Lower lobe of right lung (tissue), 2 donors: ENCODE measurements at regions of chr22 and their contacts with region 1.

Region 1: GRCh38 chr22:40922484-40923303 is 28.5 kb upstream of the RBX1 start:
- DNase-seq: no peak
- ATAC-seq: peak; percentile 83
- H3K4me3 ChIP-seq: no peak overlapping the region
- H3K27ac ChIP-seq: no peak overlapping the region
- H3K4me1 ChIP-seq: peaks cover 4% of the 10 kb centered on the region
- H3K27me3 ChIP-seq: no peaks in the 10 kb centered on the region
- CTCF ChIP-seq: peak; percentile 77

Region 2: DNA sequence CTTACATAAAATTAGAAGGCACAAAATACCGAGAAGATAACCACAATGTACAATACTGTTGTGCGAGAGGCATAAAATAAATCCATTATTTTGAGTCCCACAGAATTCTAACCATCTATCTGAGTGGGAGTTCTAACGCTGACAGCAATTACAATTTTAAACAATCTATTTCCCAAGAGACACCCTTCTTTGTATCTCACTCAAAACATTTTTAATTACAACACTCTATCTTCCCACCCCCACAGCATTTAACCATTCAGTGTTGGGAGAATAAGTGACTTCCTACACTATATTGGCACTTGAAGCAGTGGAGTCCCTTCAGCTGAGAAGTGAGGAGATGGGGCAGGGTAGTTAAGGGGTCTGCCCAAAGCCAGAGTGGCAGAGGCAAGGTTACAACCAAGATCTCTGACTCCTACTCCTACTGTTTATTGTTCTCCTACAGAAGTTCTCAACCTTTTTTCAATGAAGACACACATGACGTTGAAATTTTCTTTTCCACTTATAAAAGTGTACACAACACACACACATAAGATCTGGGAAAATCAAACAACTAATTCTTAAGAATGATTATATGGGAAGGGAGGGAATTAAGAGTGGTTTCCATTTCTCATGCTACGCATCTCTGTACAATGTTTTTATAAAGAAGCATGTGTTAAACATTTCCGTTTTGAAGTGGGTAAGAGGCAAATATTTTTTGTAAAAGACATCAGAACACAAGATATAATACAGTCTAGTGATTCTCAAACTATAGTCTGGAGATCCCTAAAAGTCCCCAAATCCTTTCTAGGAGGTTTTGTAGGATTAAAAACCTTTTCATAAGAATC is 114.5 kb before region 1 on chr22:
- intact Hi-C with region 1: no loop called
- DNase-seq: no peak
- ATAC-seq: peak in 1 of 2 donors; percentile 62
- H3K4me3 ChIP-seq: no peak overlapping the region
- H3K27ac ChIP-seq: no peak overlapping the region
- H3K4me1 ChIP-seq: peaks cover 8% of the 10 kb centered on the region
- H3K27me3 ChIP-seq: no peaks in the 10 kb centered on the region
- CTCF ChIP-seq: no peak

Region 3: DNA sequence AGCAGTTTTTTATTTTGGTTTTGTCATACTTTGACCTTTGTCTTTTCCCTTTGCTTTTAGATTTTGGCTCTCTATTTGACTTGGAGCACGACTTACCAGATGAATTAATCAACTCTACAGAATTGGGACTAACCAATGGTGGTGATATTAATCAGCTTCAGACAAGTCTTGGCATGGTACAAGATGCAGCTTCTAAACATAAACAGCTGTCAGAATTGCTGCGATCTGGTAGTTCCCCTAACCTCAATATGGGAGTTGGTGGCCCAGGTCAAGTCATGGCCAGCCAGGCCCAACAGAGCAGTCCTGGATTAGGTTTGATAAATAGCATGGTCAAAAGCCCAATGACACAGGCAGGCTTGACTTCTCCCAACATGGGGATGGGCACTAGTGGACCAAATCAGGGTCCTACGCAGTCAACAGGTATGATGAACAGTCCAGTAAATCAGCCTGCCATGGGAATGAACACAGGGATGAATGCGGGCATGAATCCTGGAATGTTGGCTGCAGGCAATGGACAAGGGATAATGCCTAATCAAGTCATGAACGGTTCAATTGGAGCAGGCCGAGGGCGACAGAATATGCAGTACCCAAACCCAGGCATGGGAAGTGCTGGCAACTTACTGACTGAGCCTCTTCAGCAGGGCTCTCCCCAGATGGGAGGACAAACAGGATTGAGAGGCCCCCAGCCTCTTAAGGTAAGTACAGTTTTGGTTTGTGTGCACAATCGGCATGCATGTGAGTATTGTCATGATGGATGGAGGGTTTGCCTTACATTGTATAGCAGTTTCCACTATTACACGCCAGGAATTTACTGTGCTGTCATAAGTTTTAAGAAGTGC is 194.7 kb after region 1 on chr22:
- intact Hi-C with region 1: loop called (anchors 10 kb)
- DNase-seq: no peak
- ATAC-seq: no peak
- H3K4me3 ChIP-seq: no peak overlapping the region
- H3K27ac ChIP-seq: no peak overlapping the region
- H3K4me1 ChIP-seq: peaks cover 16% of the 10 kb centered on the region
- H3K27me3 ChIP-seq: no peaks in the 10 kb centered on the region
- CTCF ChIP-seq: no peak